Ascending aorta (tissue), 2 donors: ENCODE measurements at regions of chr6 and their contacts with region 1.

Region 1: GRCh38 chr6:12605888-12606345 is 110.7 kb upstream of the PHACTR1 start:
- DNase-seq: no peak
- H3K4me3 ChIP-seq: no peak overlapping the region
- H3K27ac ChIP-seq: no peak overlapping the region
- H3K4me1 ChIP-seq: peaks cover 0 to 19% of the 10 kb centered on the region in 2 donors
- H3K27me3 ChIP-seq: no peaks in the 10 kb centered on the region
- CTCF ChIP-seq: peak in 2 of 3 experiments; percentile 44 to 64

Region 2: GRCh38 chr6:11653028-11653583 is 952.8 kb before region 1 on chr6:
- intact Hi-C with region 1: loop called (anchors 5 kb)
- DNase-seq: no peak
- H3K4me3 ChIP-seq: no peak overlapping the region
- H3K27ac ChIP-seq: no peak overlapping the region
- H3K4me1 ChIP-seq: peaks cover 0 to 28% of the 10 kb centered on the region in 2 donors
- H3K27me3 ChIP-seq: no peaks in the 10 kb centered on the region
- CTCF ChIP-seq: no peak

Region 3: GRCh38 chr6:12289933-12290820 is 315.7 kb before region 1 on chr6 and contains the start of gene EDN1:
- intact Hi-C with region 1: loop called (anchors 1 kb)
- DNase-seq: peak in 1 of 2 donors; percentile 85
- H3K4me3 ChIP-seq: peak within 1 kb of the TSS; percentile 48 to 69
- H3K27ac ChIP-seq: peak within 1 kb of the TSS; percentile 19 to 65
- H3K4me1 ChIP-seq: peaks cover 4 to 23% of the 10 kb centered on the region in 2 donors
- H3K27me3 ChIP-seq: no peaks in the 10 kb centered on the region
- CTCF ChIP-seq: peak; percentile 31 to 61 (median 48)
- total RNA-seq, gene EDN1: 27.8 TPM

Region 4: GRCh38 chr6:12395898-12396297 is 210.0 kb before region 1 on chr6:
- intact Hi-C with region 1: loop called (anchors 5 kb)
- DNase-seq: no peak
- H3K4me3 ChIP-seq: no peak overlapping the region
- H3K27ac ChIP-seq: no peak overlapping the region
- H3K4me1 ChIP-seq: peaks cover 0 to 5% of the 10 kb centered on the region in 2 donors
- H3K27me3 ChIP-seq: no peaks in the 10 kb centered on the region
- CTCF ChIP-seq: no peak

Region 5: GRCh38 chr6:12545619-12546409 is 60.1 kb before region 1 on chr6:
- intact Hi-C with region 1: loop called (anchors 5 kb)
- DNase-seq: no peak
- H3K4me3 ChIP-seq: no peak overlapping the region
- H3K27ac ChIP-seq: peak overlapping the region; percentile 15 to 59
- H3K4me1 ChIP-seq: peaks cover 4 to 28% of the 10 kb centered on the region in 2 donors
- H3K27me3 ChIP-seq: no peaks in the 10 kb centered on the region
- CTCF ChIP-seq: no peak